Activated B cell treated with CpG ODN at 0.5 μM for 24 hours (primary cell): ENCODE measurements at regions of chr19 and their contacts with region 1.

Region 1: GRCh38 chr19:57240311-57241090 is at the start of gene ZNF805:
- DNase-seq: peak; percentile 90
- ATAC-seq: peak; percentile 93
- H3K4me3 Mint-ChIP-seq: peak within 1 kb of the TSS; percentile 95
- H3K27ac Mint-ChIP-seq: peak within 1 kb of the TSS; percentile 93
- H3K4me1 Mint-ChIP-seq: peaks cover 39% of the 10 kb centered on the region
- H3K27me3 Mint-ChIP-seq: no peaks in the 10 kb centered on the region
- CTCF ChIP-seq: no peak
- total RNA-seq, gene ZNF805: 20.3 and 25.9 TPM in 2 replicates

Region 2: GRCh38 chr19:56111601-56112312 is 1128.7 kb before region 1 on chr19:
- CTCF ChIA-PET with region 1: no interaction called
- POLR2A ChIA-PET with region 1: no interaction called
- intact Hi-C with region 1: no loop called
- DNase-seq: peak; percentile 61
- ATAC-seq: peak; percentile 96
- H3K4me3 Mint-ChIP-seq: peak overlapping the region; percentile 77
- H3K27ac Mint-ChIP-seq: peak overlapping the region; percentile 84
- H3K4me1 Mint-ChIP-seq: peaks cover 83% of the 10 kb centered on the region
- H3K27me3 Mint-ChIP-seq: no peaks in the 10 kb centered on the region
- CTCF ChIP-seq: no peak

Region 3: GRCh38 chr19:57191141-57192076 is 49.1 kb before region 1 on chr19 and contains the start of gene ZNF264:
- CTCF ChIA-PET with region 1: no interaction called
- POLR2A ChIA-PET with region 1: interaction called, 15 read pairs
- intact Hi-C with region 1: loop called (anchors 1 kb)
- DNase-seq: peak; percentile 88
- ATAC-seq: peak; percentile 99
- H3K4me3 Mint-ChIP-seq: peak within 1 kb of the TSS; percentile 92
- H3K27ac Mint-ChIP-seq: peak within 1 kb of the TSS; percentile 94
- H3K4me1 Mint-ChIP-seq: peaks cover 36% of the 10 kb centered on the region
- H3K27me3 Mint-ChIP-seq: peaks cover 5% of the 10 kb centered on the region
- CTCF ChIP-seq: no peak
- total RNA-seq, gene ZNF264: 56.2 and 58.7 TPM in 2 replicates

Region 4: GRCh38 chr19:57212109-57212508 is 28.4 kb before region 1 on chr19:
- CTCF ChIA-PET with region 1: no interaction called
- POLR2A ChIA-PET with region 1: no interaction called
- intact Hi-C with region 1: no loop called
- DNase-seq: no peak
- ATAC-seq: no peak
- H3K4me3 Mint-ChIP-seq: no peak overlapping the region
- H3K27ac Mint-ChIP-seq: no peak overlapping the region
- H3K4me1 Mint-ChIP-seq: peaks cover 4% of the 10 kb centered on the region
- H3K27me3 Mint-ChIP-seq: no peaks in the 10 kb centered on the region
- CTCF ChIP-seq: no peak

Region 5: GRCh38 chr19:57269515-57270250 is 29.2 kb after region 1 on chr19:
- CTCF ChIA-PET with region 1: no interaction called
- POLR2A ChIA-PET with region 1: interaction called, 23 read pairs
- intact Hi-C with region 1: no loop called
- DNase-seq: no peak
- ATAC-seq: peak; percentile 66
- H3K4me3 Mint-ChIP-seq: peak overlapping the region; percentile 72
- H3K27ac Mint-ChIP-seq: peak overlapping the region; percentile 95
- H3K4me1 Mint-ChIP-seq: peaks cover 65% of the 10 kb centered on the region
- H3K27me3 Mint-ChIP-seq: no peaks in the 10 kb centered on the region
- CTCF ChIP-seq: no peak

Region 6: GRCh38 chr19:57320180-57321084 is 79.9 kb after region 1 on chr19 and contains the start of gene ZNF543:
- CTCF ChIA-PET with region 1: no interaction called
- POLR2A ChIA-PET with region 1: interaction called, 3 read pairs
- intact Hi-C with region 1: loop called (anchors 1 kb)
- DNase-seq: peak; percentile 90
- ATAC-seq: peak; percentile 97
- H3K4me3 Mint-ChIP-seq: peak within 1 kb of the TSS; percentile 95
- H3K27ac Mint-ChIP-seq: peak within 1 kb of the TSS; percentile 98
- H3K4me1 Mint-ChIP-seq: peaks cover 30% of the 10 kb centered on the region
- H3K27me3 Mint-ChIP-seq: peaks cover 17% of the 10 kb centered on the region
- CTCF ChIP-seq: no peak
- total RNA-seq, gene ZNF543: 14.0 and 16.1 TPM in 2 replicates

Region 7: GRCh38 chr19:57350877-57351805 is 110.6 kb after region 1 on chr19 and contains the start of gene ZNF304:
- CTCF ChIA-PET with region 1: no interaction called
- POLR2A ChIA-PET with region 1: interaction called, 3 read pairs
- intact Hi-C with region 1: loop called (anchors 1 kb)
- DNase-seq: peak; percentile 66
- ATAC-seq: peak; percentile 100
- H3K4me3 Mint-ChIP-seq: peak within 1 kb of the TSS; percentile 94
- H3K27ac Mint-ChIP-seq: peak within 1 kb of the TSS; percentile 78
- H3K4me1 Mint-ChIP-seq: peaks cover 33% of the 10 kb centered on the region
- H3K27me3 Mint-ChIP-seq: peaks cover 3% of the 10 kb centered on the region
- CTCF ChIP-seq: no peak
- total RNA-seq, gene ZNF304: 12.4 and 13.5 TPM in 2 replicates

Region 8: DNA sequence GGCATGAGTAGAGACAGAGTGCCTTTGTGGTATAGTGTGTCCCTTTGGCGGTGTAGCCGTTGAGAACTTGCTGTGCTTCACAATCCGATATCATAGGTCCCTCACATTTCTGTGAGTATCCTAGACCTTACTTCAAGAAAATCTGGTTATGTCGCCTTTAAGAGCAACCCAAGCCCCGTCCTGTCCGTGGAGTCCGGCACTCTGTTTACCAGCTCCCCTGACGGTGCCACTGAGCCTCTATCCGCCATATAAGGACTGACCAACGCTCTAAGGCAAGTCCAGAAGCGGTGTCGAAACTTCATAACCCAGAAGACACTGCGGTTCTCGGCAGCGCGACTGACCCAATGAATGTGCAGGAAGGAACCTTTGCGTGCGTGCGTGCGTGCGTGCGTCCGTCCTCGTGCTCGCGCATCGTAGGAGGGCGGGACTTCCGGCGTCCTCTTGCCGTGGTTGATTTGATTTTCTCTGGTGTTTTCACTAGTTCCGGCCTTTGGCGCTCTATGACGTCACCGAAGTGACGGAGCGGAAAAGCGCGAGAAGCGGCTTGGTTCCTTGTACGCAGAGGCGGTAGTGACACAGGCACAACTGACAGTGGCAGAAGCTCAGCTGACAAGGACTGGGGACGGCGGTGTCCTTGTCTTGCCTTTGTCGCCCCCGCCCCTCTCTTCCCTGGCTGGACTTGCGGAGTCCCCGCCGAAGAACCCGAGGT is 122.7 kb after region 1 on chr19 and contains the starts of genes TRAPPC2B and ZNF547:
- CTCF ChIA-PET with region 1: no interaction called
- POLR2A ChIA-PET with region 1: interaction called, 3 read pairs
- intact Hi-C with region 1: loop called (anchors 1 kb)
- DNase-seq: peak; percentile 99
- ATAC-seq: peak; percentile 94
- H3K4me3 Mint-ChIP-seq: peak within 1 kb of the TSS; percentile 92
- H3K27ac Mint-ChIP-seq: peak within 1 kb of the TSS; percentile 95
- H3K4me1 Mint-ChIP-seq: peaks cover 17% of the 10 kb centered on the region
- H3K27me3 Mint-ChIP-seq: no peaks in the 10 kb centered on the region
- CTCF ChIP-seq: no peak
- total RNA-seq, gene TRAPPC2B: 9.7 and 10.2 TPM in 2 replicates
- total RNA-seq, gene ZNF547: 6.0 and 6.3 TPM in 2 replicates